ENCODE measurements at regions of chr1 and their contacts with region 1.

Region 1: GRCh38 chr1:110209715-110210603 is at the start of gene KCNC4:
- DNase-seq: peak; percentile 95
- H3K4me3 Mint-ChIP-seq: peak within 1 kb of the TSS; percentile 86
- H3K27ac Mint-ChIP-seq: peak within 1 kb of the TSS; percentile 95
- H3K4me1 Mint-ChIP-seq: peaks cover 42% of the 10 kb centered on the region
- H3K27me3 Mint-ChIP-seq: peaks cover 31% of the 10 kb centered on the region

Region 2: GRCh38 chr1:110136911-110137310 is 73.0 kb before region 1 on chr1:
- CTCF ChIA-PET with region 1: no interaction called
- DNase-seq: peak; percentile 72
- H3K4me3 Mint-ChIP-seq: no peak overlapping the region
- H3K27ac Mint-ChIP-seq: no peak overlapping the region
- H3K4me1 Mint-ChIP-seq: peaks cover 13% of the 10 kb centered on the region
- H3K27me3 Mint-ChIP-seq: peaks cover 56% of the 10 kb centered on the region

Region 3: GRCh38 chr1:110243574-110243973 is 33.6 kb after region 1 on chr1:
- CTCF ChIA-PET with region 1: interaction called, 16 read pairs
- DNase-seq: no peak
- H3K4me3 Mint-ChIP-seq: no peak overlapping the region
- H3K27ac Mint-ChIP-seq: no peak overlapping the region
- H3K4me1 Mint-ChIP-seq: no peaks in the 10 kb centered on the region
- H3K27me3 Mint-ChIP-seq: no peaks in the 10 kb centered on the region

Region 4: DNA sequence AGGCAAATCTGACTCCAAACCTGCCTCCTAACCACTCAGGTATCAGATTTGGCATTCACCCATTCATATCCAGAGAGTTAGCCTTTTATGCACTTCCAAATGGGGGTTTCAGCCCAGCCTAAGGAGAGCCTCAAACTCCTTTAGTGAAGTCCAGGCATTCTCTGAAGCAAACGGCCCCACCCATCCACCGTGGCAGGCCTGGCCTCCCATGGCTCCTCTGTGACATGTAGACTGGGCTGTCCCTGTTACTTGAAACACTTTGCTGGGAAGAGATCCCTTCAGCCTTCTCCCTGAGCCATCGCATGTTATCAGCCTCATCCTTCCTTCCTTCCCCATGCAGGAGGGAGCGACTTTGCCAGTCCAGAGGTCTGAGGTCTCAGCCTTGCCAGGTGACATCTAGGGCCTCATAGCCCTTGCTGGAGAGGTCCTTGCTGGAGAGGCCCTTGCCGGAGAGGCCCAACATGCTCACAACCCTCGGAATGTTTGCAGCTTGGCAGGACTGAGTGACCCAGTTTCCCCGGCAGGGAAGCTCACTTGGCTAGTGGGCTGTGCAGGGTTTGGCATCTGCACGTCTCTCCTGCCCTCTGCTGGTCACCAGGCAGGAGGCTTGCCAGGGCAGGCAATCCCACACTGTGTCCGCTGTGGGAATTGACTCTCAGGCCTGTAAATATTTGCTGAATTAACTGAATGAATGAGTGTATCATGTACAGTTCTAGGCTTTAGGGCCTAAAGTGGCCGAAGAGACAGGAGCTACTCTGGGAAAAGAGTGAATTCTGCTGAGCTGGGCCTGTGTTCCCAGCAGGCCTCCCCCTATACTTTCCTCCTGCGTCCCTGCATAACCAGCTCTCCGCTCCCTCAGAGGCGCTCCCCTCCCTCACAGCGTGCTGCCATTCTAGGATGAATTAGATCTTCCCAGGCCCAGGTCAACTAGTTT is 102.5 kb after region 1 on chr1:
- CTCF ChIA-PET with region 1: interaction called, 470 read pairs
- DNase-seq: peak; percentile 82
- H3K4me3 Mint-ChIP-seq: no peak overlapping the region
- H3K27ac Mint-ChIP-seq: no peak overlapping the region
- H3K4me1 Mint-ChIP-seq: no peaks in the 10 kb centered on the region
- H3K27me3 Mint-ChIP-seq: no peaks in the 10 kb centered on the region

Region 5: DNA sequence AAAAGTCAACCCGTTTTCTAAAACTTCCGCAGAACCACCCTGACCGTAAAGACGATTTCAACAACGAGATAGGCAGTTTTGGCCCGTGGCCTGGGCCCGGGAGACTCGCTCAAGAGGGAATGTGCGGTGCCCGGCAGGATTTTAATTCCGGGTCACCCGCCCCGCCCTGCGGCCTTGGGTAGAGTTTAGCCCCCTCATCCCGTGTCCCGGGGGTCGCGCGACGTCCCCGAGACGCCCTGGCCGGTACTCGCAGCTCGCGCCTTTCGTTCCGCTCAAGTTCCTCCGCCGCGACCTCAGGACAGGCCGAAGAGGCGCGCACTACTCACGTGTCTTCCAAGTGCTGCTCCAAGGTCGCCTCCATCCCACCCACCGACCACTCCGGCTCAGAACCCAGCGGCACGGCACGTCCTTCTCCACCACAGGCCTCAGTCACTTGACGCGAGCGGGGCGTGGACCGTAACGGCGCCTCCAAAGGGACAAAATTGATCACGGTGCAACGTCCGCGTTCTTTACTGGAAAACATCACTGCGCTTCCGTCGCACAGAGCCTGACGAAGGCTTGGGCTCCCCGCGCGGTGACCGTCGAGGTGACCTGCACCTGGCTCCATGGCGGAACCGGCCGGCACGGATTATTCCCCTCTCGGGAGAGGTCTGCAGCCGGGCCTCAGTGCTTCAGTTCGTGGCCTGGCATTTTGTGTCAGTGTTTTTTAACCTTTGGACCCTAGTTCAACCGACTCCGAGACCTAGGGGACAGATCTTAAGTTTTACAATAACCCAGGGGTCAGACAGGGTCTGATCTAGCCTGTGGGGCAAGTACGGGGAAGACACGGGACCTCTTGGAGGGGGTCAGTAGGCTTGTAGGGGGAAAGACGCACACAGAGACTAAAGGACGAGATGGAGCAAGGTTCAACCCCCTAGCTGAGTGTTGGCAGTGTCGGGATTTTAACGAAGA is 197.6 kb after region 1 on chr1 and contains the start of gene LAMTOR5:
- CTCF ChIA-PET with region 1: interaction called, 14 read pairs
- DNase-seq: peak; percentile 96
- H3K4me3 Mint-ChIP-seq: peak within 1 kb of the TSS; percentile 99
- H3K27ac Mint-ChIP-seq: peak within 1 kb of the TSS; percentile 99
- H3K4me1 Mint-ChIP-seq: peaks cover 33% of the 10 kb centered on the region
- H3K27me3 Mint-ChIP-seq: no peaks in the 10 kb centered on the region

Region 6: DNA sequence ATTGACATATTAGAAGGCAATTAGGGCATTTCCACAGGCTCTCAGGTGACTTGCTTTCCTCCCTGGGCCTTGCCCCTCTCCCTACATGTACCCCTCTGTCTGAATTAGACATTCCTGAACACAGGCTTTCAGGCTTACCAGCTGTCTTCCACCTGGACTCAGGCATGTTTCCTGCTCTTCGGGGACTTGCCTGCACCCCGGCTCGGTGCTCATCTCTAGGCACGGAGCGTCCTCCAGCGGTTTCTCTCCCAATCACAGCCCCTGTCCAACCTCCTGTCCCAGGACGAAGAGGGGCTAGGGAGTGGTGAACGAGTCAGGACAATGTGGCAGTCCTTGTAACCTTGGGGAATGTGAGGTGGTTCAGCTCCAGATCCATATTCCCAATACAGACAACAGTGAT is 245.2 kb after region 1 on chr1:
- CTCF ChIA-PET with region 1: interaction called, 96 read pairs
- DNase-seq: no peak
- H3K4me3 Mint-ChIP-seq: no peak overlapping the region
- H3K27ac Mint-ChIP-seq: no peak overlapping the region
- H3K4me1 Mint-ChIP-seq: no peaks in the 10 kb centered on the region
- H3K27me3 Mint-ChIP-seq: peaks cover 27% of the 10 kb centered on the region

Measured in activated naive CD4-positive, alpha-beta T cell treated with anti-CD3 and anti-CD28 coated beads, Interleukin-2, amount 10 ng/mL, durations not matched to agents 7 days and 5 days (primary cell).